Heart left ventricle (tissue), 16 donors: ENCODE measurements at regions of chr18 and their contacts with region 1.

Region 1: DNA sequence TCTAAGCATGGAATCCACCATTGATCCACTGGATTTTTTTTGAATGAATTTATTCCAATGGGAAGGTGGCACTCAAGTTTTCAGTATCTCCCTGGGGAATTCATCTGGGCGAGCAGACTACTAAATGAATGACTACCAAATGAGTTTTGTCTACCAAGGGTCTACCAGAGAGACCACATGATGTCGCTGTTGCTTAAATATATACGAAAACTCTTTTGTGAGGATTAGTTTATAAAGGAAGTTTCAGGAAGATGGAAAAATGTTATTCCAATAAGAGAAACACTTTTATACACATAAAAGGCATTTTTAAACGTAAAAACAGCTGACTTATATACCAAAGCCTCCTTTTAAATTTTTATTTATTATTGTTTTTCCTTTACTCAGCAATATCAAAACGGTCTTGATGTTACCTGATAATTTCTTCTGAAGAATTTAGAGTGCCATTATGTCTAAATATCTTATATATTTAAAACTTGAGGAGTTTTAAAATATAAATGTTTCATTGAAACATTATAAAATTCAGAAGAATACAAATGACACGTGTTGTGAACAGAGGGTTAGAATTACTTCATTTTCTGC is 139.7 kb downstream of the HRH4 start:
- DNase-seq: peak in 1 of 5 donors; percentile 17
- ATAC-seq: peak in 1 of 4 donors; percentile 50
- H3K4me3 ChIP-seq: no peak overlapping the region
- H3K27ac ChIP-seq: no peak overlapping the region
- H3K4me1 ChIP-seq: no peaks in the 10 kb centered on the region
- H3K27me3 ChIP-seq: peaks cover 0 to 4% (median 0%) of the 10 kb centered on the region in 9 donors
- CTCF ChIP-seq: peak; percentile 50 to 80 (median 72)
- POLR2A ChIP-seq: no peak

Region 2: DNA sequence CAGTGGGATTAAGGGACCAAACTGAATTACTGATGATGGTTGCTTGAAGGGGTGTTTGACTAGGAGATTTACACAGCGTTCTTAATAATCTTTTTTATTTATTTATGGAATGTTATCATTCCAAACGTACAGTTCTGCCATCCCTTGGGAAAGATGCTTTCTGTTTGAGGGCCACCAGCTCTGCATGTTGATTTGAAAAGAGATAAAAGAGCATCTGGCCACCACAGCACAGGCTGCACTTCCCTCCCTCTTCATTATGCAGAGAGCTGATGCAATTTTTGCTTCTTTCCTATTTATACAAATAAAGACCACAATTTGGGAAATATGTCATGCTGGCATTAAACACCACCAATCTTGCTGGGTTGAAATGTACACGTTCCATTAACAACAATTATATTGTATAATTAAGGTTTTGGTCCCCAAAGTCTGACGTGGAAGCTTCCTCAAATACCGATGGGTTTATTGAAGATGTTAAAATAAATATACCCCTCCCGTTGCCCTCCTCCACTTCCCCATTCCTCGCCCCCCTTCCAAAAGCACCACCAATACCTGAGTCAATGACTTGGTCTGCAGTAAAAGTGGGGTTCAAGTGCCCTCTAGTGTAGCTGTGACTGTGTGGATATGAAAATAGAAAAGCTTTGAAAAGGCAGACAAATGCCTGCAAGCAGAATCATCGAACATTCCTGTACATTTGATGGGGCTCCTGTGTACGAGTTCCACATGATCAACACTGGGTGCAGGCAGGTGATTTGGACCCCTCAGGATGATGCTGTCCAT is 72.2 kb after region 1 on chr18:
- intact Hi-C with region 1: loop called in 9 of 10 experiments (anchors 2 to 10 kb)
- DNase-seq: no peak
- ATAC-seq: no peak
- H3K4me3 ChIP-seq: no peak overlapping the region
- H3K27ac ChIP-seq: no peak overlapping the region
- H3K4me1 ChIP-seq: no peaks in the 10 kb centered on the region
- H3K27me3 ChIP-seq: no peaks in the 10 kb centered on the region
- CTCF ChIP-seq: peak in 6 of 12 donors; percentile 8 to 37 (median 24)
- POLR2A ChIP-seq: no peak

Region 3: DNA sequence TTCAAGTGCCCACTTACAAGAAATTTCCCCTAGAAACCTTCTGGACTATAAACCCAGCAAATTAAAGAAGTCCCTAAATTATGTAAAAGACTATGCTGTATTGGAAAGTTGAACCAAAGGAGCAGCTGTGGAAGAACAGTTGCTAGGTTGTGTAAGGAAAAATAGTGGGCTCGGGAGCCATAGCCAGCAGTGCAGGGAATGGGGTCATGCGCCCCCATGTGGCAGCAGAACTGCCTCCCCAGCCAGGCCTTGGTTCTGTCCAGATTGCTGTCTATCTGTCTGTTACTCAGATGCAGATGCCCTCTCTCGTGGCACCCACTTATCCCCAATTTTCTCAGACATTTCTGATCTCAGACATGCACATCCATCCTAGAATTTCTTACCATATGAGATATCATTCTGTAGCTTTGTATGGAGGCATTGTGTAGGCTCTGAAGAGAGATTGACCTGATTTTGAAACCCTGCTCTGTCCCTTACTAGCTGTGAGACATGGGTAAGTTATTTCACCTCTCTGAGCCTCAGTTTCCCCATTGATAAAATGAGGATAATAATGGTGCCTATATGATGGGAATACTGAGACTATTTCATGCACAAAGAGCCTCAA is 1231.9 kb after region 1 on chr18:
- intact Hi-C with region 1: loop called in 1 of 10 experiments (anchors 10 kb)
- DNase-seq: peak; percentile 43 to 77 (median 65)
- ATAC-seq: peak; percentile 79 to 90 (median 86)
- H3K4me3 ChIP-seq: no peak overlapping the region
- H3K27ac ChIP-seq: no peak overlapping the region
- H3K4me1 ChIP-seq: peaks cover 0 to 12% (median 0%) of the 10 kb centered on the region in 12 donors
- H3K27me3 ChIP-seq: no peaks in the 10 kb centered on the region
- CTCF ChIP-seq: peak; percentile 60 to 83 (median 70)
- POLR2A ChIP-seq: no peak